Activated T-helper 1 cell treated with anti-CD3 and anti-CD28 coated beads, Interleukin-12 subunit alpha, Interleukin-12 subunit beta, Interleukin-2, Interleukin-4 antibody, amounts not matched to agents 30 ng/mL and 10 ng/mL and 1 ng/mL, durations not matched to agents 14 hours and 24 hours and 36 hours (primary cell): ENCODE measurements at regions of chr4 and their contacts with region 1.

Region 1: GRCh38 chr4:110510955-110511544 is 35.1 kb downstream of the ENPEP start:
- DNase-seq: no peak
- H3K4me3 Mint-ChIP-seq: no peak overlapping the region
- H3K27ac Mint-ChIP-seq: no peak overlapping the region
- H3K4me1 Mint-ChIP-seq: peaks cover 11% of the 10 kb centered on the region
- H3K27me3 Mint-ChIP-seq: peaks cover 4% of the 10 kb centered on the region

Region 2: DNA sequence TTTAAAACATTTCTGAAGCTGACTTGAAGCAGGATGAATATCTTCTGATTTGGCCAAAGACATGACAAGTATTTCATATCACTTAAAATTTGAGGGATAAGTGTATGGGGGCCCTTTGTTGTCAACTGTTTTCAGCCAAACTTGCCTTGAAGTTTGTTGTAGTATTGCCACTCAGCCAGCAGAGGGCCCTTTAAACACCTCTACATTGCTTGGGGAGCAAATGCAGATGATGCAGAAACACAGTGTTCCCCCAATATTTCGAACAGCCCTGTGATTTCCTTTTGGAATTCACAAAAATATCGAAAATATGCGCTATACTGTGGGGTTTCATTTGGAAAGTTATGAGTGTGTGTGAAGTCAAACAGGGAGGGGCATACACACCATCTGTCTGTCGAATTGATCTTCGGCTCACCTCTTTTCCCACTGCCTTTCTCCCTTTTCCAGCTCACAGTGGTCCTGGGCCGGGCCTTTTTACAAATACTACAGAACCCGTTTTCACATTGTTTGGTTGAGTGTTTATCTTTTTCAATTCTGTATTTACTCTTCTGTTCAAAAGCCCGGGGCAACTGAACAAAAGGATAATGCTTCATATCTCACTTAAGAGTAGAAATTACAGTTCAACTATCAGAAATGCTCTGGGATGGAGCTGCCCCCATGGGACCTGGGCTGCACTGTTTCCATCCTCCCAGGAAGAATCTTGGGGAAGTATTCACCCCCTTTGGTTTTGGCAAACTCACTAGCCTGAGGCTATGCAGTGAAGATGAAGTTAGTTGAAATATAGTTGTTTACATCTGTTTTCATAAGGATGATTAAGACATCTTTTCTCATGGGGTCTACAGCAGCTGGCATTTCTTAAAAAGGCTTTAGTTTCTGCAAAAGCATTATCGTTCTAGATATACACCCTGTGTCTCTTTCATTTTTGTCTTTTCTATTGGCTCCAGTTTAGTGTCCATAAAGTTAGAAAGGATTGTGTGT is 460.8 kb before region 1 on chr4:
- intact Hi-C with region 1: loop called (anchors 2 kb)
- DNase-seq: peak; percentile 27
- H3K4me3 Mint-ChIP-seq: no peak overlapping the region
- H3K27ac Mint-ChIP-seq: no peak overlapping the region
- H3K4me1 Mint-ChIP-seq: peaks cover 52% of the 10 kb centered on the region
- H3K27me3 Mint-ChIP-seq: no peaks in the 10 kb centered on the region

Region 3: GRCh38 chr4:110268352-110268751 is 242.7 kb before region 1 on chr4:
- intact Hi-C with region 1: no loop called
- DNase-seq: no peak
- H3K4me3 Mint-ChIP-seq: no peak overlapping the region
- H3K27ac Mint-ChIP-seq: peak overlapping the region; percentile 55
- H3K4me1 Mint-ChIP-seq: peaks cover 7% of the 10 kb centered on the region
- H3K27me3 Mint-ChIP-seq: peaks cover 29% of the 10 kb centered on the region

Region 4: GRCh38 chr4:110310795-110311194 is 200.3 kb before region 1 on chr4:
- intact Hi-C with region 1: loop called (anchors 1 kb)
- DNase-seq: no peak
- H3K4me3 Mint-ChIP-seq: no peak overlapping the region
- H3K27ac Mint-ChIP-seq: no peak overlapping the region
- H3K4me1 Mint-ChIP-seq: no peaks in the 10 kb centered on the region
- H3K27me3 Mint-ChIP-seq: peaks cover 13% of the 10 kb centered on the region

Region 5: GRCh38 chr4:110586131-110586850 is 75.2 kb after region 1 on chr4:
- intact Hi-C with region 1: no loop called
- DNase-seq: no peak
- H3K4me3 Mint-ChIP-seq: no peak overlapping the region
- H3K27ac Mint-ChIP-seq: no peak overlapping the region
- H3K4me1 Mint-ChIP-seq: no peaks in the 10 kb centered on the region
- H3K27me3 Mint-ChIP-seq: no peaks in the 10 kb centered on the region